ENCODE measurements at regions of chr3 and their contacts with region 1.

Region 1: GRCh38 chr3:31041161-31041978 is 146.9 kb upstream of the GADL1 start:
- DNase-seq: peak; percentile 90
- H3K4me3 ChIP-seq: no peak overlapping the region
- H3K27ac ChIP-seq: peak overlapping the region; percentile 11
- H3K4me1 ChIP-seq: peaks cover 44% of the 10 kb centered on the region
- H3K27me3 ChIP-seq: no peaks in the 10 kb centered on the region
- CTCF ChIP-seq: no peak

Region 2: DNA sequence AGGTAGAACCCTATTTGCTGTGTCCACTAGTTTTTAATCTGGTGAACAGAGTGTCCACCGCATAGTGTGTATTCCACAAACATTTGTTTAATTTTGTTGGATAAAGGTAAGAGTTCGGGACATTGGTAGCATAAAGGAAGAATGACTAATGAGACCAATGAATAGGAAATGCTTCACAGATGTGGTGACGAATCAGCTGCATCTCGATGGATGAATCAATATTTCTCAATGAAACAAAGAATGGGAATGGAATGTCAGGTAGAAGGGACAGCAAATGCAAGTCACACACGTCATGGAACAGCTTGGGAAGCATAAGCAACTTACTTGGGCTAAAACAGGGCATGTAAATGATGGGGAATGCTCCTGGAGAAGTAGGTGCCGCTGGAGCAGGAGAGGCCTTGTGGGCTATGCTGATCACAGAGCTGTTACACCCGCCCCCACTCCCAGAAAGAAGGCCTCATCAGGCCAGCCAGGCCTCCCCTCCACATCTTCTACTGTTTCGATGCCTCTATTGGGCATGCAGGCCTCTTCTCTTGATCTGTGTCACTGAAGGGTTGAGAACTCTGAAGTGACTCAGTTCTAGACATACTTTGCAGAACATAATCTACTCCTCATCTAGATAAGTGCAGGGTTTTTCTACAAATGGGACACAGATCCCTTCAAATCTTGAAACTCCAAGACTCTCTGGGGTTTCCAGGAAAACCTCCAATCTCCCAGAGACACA is 26.9 kb before region 1 on chr3:
- CTCF ChIA-PET with region 1: no interaction called
- dilution Hi-C with region 1: no loop called
- in situ Hi-C with region 1: no loop called
- intact Hi-C with region 1: loop called (anchors 2 kb)
- DNase-seq: peak; percentile 80
- H3K4me3 ChIP-seq: no peak overlapping the region
- H3K27ac ChIP-seq: peak overlapping the region; percentile 51
- H3K4me1 ChIP-seq: peaks cover 34% of the 10 kb centered on the region
- H3K27me3 ChIP-seq: no peaks in the 10 kb centered on the region
- CTCF ChIP-seq: no peak

Region 3: GRCh38 chr3:31077021-31077601 is 35.7 kb after region 1 on chr3:
- CTCF ChIA-PET with region 1: no interaction called
- dilution Hi-C with region 1: no loop called
- in situ Hi-C with region 1: no loop called
- intact Hi-C with region 1: loop called (anchors 1 kb)
- DNase-seq: peak; percentile 99
- H3K4me3 ChIP-seq: no peak overlapping the region
- H3K27ac ChIP-seq: peak overlapping the region; percentile 78
- H3K4me1 ChIP-seq: peaks cover 39% of the 10 kb centered on the region
- H3K27me3 ChIP-seq: no peaks in the 10 kb centered on the region
- CTCF ChIP-seq: no peak

Region 4: DNA sequence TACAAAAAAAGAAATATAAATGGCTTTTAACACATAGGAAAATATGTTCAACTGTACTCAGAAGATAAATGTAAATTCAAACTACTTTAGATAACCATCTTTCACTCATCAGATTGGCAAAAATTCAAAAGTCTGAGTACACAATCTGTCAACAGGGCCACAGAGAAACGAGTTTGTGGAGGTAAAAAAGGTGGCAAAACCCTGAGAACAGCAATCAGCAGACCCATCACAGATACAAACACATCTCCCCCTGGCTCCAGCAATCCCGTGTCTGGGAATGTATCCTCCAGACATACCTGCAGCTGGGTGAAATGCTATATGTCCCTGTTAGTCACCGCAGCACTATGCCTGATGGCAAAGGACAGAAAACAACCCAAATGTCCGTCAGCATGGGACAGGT is 790.2 kb after region 1 on chr3:
- CTCF ChIA-PET with region 1: no interaction called
- dilution Hi-C with region 1: no loop called
- in situ Hi-C with region 1: no loop called
- intact Hi-C with region 1: no loop called
- DNase-seq: no peak
- H3K4me3 ChIP-seq: no peak overlapping the region
- H3K27ac ChIP-seq: no peak overlapping the region
- H3K4me1 ChIP-seq: no peaks in the 10 kb centered on the region
- H3K27me3 ChIP-seq: no peaks in the 10 kb centered on the region
- CTCF ChIP-seq: no peak

Measured in mammary epithelial cell (primary cell).